Activated B cell treated with CpG ODN at 0.5 μM for 24 hours (primary cell): ENCODE measurements at regions of chr2 and their contacts with region 1.

Region 1: DNA sequence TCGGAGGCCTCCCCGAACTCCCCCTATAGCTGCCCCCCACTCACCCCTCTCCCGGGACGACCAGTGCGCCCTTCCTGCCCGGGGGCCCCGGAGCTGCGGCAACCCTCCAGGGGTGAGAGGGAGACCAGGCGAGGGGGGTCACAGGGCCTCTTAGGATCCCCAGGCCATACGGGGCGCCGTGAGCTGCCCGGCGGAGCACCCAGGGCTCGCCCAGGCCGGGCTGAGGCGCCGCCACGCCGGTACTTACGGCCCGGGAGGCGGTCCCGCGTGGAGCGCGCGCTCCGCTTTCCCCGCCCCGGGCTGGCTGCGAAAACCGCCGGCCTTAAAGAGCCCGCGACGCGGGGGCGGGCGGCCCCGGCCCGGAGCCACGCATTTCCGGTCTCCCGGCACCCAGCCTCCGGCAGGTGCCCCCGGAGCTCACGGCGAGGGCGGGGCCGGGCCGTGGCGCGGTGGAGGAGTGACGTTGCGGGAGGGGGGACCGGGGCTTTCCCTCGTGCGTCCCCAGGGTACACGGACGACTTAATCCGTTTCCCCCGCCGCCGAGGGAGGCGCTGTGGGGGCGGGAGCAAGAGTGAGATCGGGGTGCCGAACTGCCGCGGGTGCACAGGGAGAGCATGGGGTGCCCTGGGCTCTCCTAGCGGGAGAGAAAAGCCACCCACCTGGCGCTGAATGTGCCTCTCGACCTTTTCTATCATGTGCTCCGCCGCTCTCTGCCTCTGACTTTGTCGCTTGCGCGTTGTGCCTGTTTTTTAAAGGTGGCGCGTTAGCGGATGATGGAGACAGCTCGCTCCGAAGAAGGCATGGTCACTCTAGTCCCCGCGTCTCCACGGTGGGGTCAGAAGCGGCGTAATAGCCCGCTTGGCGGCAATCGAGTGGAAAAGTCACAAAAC is at the start of gene METTL21A:
- DNase-seq: peak; percentile 96
- ATAC-seq: peak; percentile 79
- H3K4me3 Mint-ChIP-seq: peak within 1 kb of the TSS; percentile 94
- H3K27ac Mint-ChIP-seq: peak within 1 kb of the TSS; percentile 98
- H3K4me1 Mint-ChIP-seq: peaks cover 50% of the 10 kb centered on the region
- H3K27me3 Mint-ChIP-seq: no peaks in the 10 kb centered on the region
- CTCF ChIP-seq: no peak
- total RNA-seq, gene METTL21A: 34.2 and 34.3 TPM in 2 replicates

Region 2: GRCh38 chr2:206502729-206503128 is 1122.5 kb before region 1 on chr2:
- CTCF ChIA-PET with region 1: no interaction called
- POLR2A ChIA-PET with region 1: no interaction called
- intact Hi-C with region 1: no loop called
- DNase-seq: no peak
- ATAC-seq: no peak
- H3K4me3 Mint-ChIP-seq: no peak overlapping the region
- H3K27ac Mint-ChIP-seq: no peak overlapping the region
- H3K4me1 Mint-ChIP-seq: peaks cover 3% of the 10 kb centered on the region
- H3K27me3 Mint-ChIP-seq: peaks cover 4% of the 10 kb centered on the region
- CTCF ChIP-seq: no peak

Region 3: GRCh38 chr2:206765242-206766056 is 859.8 kb before region 1 on chr2 and contains the starts of genes FASTKD2 and MDH1B:
- CTCF ChIA-PET with region 1: no interaction called
- POLR2A ChIA-PET with region 1: interaction called, 8 read pairs
- intact Hi-C with region 1: loop called (anchors 1 kb)
- DNase-seq: peak; percentile 77
- ATAC-seq: peak; percentile 87
- H3K4me3 Mint-ChIP-seq: peak within 1 kb of the TSS; percentile 94
- H3K27ac Mint-ChIP-seq: peak within 1 kb of the TSS; percentile 96
- H3K4me1 Mint-ChIP-seq: peaks cover 34% of the 10 kb centered on the region
- H3K27me3 Mint-ChIP-seq: peaks cover 3% of the 10 kb centered on the region
- CTCF ChIP-seq: no peak
- total RNA-seq, gene FASTKD2: 29.1 and 29.6 TPM in 2 replicates
- total RNA-seq, gene MDH1B: not detected in 2 replicates

Region 4: GRCh38 chr2:207584952-207585351 is 40.3 kb before region 1 on chr2:
- CTCF ChIA-PET with region 1: no interaction called
- POLR2A ChIA-PET with region 1: interaction called, 3 read pairs
- intact Hi-C with region 1: loop called (anchors 5 kb)
- DNase-seq: no peak
- ATAC-seq: no peak
- H3K4me3 Mint-ChIP-seq: no peak overlapping the region
- H3K27ac Mint-ChIP-seq: no peak overlapping the region
- H3K4me1 Mint-ChIP-seq: peaks cover 7% of the 10 kb centered on the region
- H3K27me3 Mint-ChIP-seq: no peaks in the 10 kb centered on the region
- CTCF ChIP-seq: no peak

Region 5: DNA sequence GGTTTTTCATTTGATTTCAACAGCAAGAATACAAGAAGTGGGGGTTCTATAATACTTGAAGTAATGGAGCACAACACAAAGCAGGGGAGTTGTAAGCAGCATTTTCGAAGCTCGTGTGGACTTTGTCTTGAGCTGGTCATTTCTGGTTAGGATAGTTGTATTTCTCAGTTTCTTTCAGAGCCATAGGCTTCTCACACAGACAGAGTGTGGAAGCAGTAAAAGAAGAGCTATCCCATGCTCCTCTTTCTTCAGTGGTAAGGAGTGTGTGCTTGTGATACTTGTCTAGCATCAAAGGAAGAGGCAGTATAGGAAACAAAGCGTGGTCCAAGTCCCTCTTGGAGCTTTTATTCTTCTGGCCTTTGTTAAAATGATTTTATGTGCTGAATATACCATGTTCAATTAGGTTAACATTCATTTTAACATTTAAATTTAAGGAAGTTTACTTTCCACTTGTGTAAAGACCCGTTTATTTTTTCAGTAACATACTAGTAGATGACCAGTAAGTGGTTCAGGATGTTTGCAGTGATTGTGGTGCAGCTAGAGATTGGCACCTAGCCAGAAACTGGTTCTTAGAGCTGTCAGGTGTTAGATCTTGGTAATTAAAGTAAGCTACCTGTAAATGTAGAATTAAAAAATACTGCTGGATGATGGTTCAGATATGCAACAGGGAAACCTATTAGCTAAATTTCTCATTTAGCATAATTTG is 100.8 kb after region 1 on chr2:
- CTCF ChIA-PET with region 1: interaction called, 13 read pairs
- POLR2A ChIA-PET with region 1: interaction called, 10 read pairs
- intact Hi-C with region 1: no loop called
- DNase-seq: no peak
- ATAC-seq: no peak
- H3K4me3 Mint-ChIP-seq: no peak overlapping the region
- H3K27ac Mint-ChIP-seq: no peak overlapping the region
- H3K4me1 Mint-ChIP-seq: peaks cover 44% of the 10 kb centered on the region
- H3K27me3 Mint-ChIP-seq: no peaks in the 10 kb centered on the region
- CTCF ChIP-seq: no peak

Region 6: DNA sequence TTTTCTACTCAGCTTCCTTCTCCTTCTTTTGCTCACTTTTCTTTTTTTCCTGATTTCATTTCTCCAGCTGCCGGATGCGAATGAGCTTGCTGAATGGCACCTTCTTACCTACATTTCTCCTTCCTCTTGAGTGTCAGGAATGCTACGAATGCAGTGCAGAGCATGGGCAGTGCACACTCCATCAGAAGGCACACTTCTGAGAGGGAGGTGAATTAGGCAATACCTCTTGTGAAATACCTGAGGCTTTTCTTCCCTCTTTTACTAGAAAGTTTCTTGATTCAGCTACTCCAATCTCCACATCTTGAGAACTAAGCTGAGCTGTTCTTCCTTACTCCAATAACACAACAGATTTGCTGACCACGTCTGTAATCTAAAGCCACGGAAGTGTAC is 348.9 kb after region 1 on chr2:
- CTCF ChIA-PET with region 1: interaction called, 3 read pairs
- POLR2A ChIA-PET with region 1: interaction called, 4 read pairs
- intact Hi-C with region 1: loop called (anchors 2 kb)
- DNase-seq: no peak
- ATAC-seq: no peak
- H3K4me3 Mint-ChIP-seq: no peak overlapping the region
- H3K27ac Mint-ChIP-seq: no peak overlapping the region
- H3K4me1 Mint-ChIP-seq: peaks cover 17% of the 10 kb centered on the region
- H3K27me3 Mint-ChIP-seq: no peaks in the 10 kb centered on the region
- CTCF ChIP-seq: no peak

Region 7: DNA sequence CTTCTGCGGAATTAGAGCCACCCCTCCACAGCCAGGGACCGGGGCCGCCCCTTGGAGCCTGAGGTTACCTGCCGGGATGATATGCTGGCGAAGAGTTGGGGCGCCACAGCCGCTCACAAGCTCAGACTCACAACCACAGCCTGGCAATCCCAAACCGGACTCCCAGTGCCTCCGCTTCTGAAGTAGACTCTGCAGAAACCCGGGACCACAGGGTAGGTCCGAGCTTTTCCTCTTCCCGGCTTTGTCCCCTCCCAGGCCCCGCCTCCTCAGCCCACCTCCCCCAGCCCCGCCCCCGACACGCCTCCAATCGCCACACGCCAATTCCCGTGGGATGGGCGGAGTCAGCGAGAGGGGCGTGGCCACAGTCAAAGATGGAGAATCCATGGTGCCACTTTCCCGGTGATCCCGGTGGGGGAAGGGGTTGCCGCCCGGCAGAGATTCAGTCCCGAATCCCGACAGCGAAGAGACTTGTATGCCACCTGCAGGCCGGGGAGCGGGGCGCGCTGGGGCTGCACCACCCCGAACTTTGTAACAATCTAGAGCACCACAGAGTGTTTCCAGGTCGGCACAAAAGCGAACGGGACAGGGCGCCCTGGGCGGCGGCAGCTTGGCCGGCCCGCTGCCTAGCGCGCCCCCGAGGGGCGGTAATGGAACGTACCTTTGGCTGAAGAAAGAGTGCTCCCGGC is 629.8 kb after region 1 on chr2 and contains the start of gene IDH1:
- CTCF ChIA-PET with region 1: no interaction called
- POLR2A ChIA-PET with region 1: no interaction called
- intact Hi-C with region 1: loop called (anchors 1 kb)
- DNase-seq: peak; percentile 99
- ATAC-seq: peak; percentile 79
- H3K4me3 Mint-ChIP-seq: peak within 1 kb of the TSS; percentile 100
- H3K27ac Mint-ChIP-seq: peak within 1 kb of the TSS; percentile 88
- H3K4me1 Mint-ChIP-seq: peaks cover 48% of the 10 kb centered on the region
- H3K27me3 Mint-ChIP-seq: no peaks in the 10 kb centered on the region
- CTCF ChIP-seq: no peak
- total RNA-seq, gene IDH1: 36.9 and 46.6 TPM in 2 replicates